ENCODE measurements at regions of chr11 and their contacts with region 1.

Region 1: GRCh38 chr11:12598330-12599256 is 75.6 kb upstream of the TEAD1 start:
- DNase-seq: peak; percentile 59
- ATAC-seq: peak; percentile 74
- H3K4me3 ChIP-seq: no peak overlapping the region
- H3K27ac ChIP-seq: peak overlapping the region; percentile 7; the same call in 1 of the 2 replicates
- H3K4me1 ChIP-seq: no peaks in the 10 kb centered on the region
- H3K27me3 ChIP-seq: no peaks in the 10 kb centered on the region
- CTCF ChIP-seq: no peak
- POLR2A ChIP-seq: no peak
- RAD21 ChIP-seq: no peak

Region 2: DNA sequence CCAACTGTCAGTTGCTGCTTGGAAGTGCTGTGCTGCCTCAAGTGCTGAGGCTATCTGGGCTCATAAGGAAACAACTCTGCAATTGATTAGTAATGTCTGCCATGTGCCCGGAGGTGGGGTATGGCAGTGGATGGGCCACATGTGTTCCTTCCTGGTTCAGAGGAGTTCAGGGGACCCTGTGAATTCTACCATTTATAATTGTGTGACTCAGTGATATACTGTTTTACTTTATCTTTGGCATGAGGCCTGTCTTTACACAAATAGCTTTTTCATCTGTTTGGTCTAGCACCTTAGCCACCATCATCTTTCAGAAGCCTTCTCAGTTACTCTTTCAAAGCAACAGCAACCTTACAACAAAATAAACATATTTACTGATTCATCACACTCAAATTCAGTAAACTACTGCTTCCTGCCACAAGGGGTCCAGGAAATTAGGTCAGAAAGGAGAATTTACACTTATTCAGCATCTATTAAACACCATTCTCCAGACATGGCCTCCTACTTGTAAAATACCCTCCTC is 611.0 kb before region 1 on chr11:
- CTCF ChIA-PET with region 1: no interaction called
- POLR2A ChIA-PET with region 1: no interaction called
- dilution Hi-C with region 1: no loop called
- in situ Hi-C with region 1: no loop called
- intact Hi-C with region 1: no loop called
- DNase-seq: peak; percentile 78
- ATAC-seq: peak; percentile 46
- H3K4me3 ChIP-seq: no peak overlapping the region; the same call in 1 of the 2 replicates
- H3K27ac ChIP-seq: peak overlapping the region; percentile 57
- H3K4me1 ChIP-seq: peaks cover 42% of the 10 kb centered on the region
- H3K27me3 ChIP-seq: no peaks in the 10 kb centered on the region
- CTCF ChIP-seq: peak; percentile 52
- POLR2A ChIP-seq: no peak
- RAD21 ChIP-seq: peak; percentile 35

Region 3: GRCh38 chr11:12029738-12030363 is 568.7 kb before region 1 on chr11:
- CTCF ChIA-PET with region 1: no interaction called
- POLR2A ChIA-PET with region 1: no interaction called
- dilution Hi-C with region 1: no loop called
- in situ Hi-C with region 1: no loop called
- intact Hi-C with region 1: no loop called
- DNase-seq: peak; percentile 65
- ATAC-seq: peak; percentile 79
- H3K4me3 ChIP-seq: no peak overlapping the region
- H3K27ac ChIP-seq: no peak overlapping the region
- H3K4me1 ChIP-seq: peaks cover 8% of the 10 kb centered on the region
- H3K27me3 ChIP-seq: no peaks in the 10 kb centered on the region
- CTCF ChIP-seq: no peak
- POLR2A ChIP-seq: no peak
- RAD21 ChIP-seq: no peak; the same call in 1 of the 2 replicates

Region 4: DNA sequence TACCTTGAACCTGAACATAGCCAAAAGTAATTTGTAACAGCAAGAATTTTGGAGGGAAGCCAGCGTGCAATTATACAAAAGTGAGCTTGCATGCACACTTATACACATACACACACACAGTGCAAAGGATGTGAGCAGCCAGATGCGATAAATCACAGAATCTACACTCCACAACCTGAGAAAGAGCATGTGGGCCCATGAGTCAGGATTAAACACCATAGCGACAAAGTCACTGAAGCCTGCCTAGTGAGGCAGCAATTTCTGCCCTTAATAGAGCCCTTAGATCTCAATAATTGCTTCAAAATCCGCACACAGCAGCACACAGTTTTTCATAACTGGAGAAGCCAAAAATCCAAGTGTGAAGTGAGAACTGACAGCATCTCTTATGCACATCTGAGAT is 33.1 kb after region 1 on chr11:
- CTCF ChIA-PET with region 1: no interaction called
- POLR2A ChIA-PET with region 1: no interaction called
- dilution Hi-C with region 1: no loop called
- in situ Hi-C with region 1: no loop called
- intact Hi-C with region 1: loop called (anchors 1 kb)
- DNase-seq: peak; percentile 31
- ATAC-seq: no peak
- H3K4me3 ChIP-seq: no peak overlapping the region
- H3K27ac ChIP-seq: no peak overlapping the region
- H3K4me1 ChIP-seq: peaks cover 2% of the 10 kb centered on the region
- H3K27me3 ChIP-seq: peaks cover 2% of the 10 kb centered on the region
- CTCF ChIP-seq: no peak
- POLR2A ChIP-seq: no peak
- RAD21 ChIP-seq: no peak